ENCODE measurements at regions of chr6 and their contacts with region 1.

Region 1: GRCh38 chr6:119463081-119463626 is 113.6 kb upstream of the MAN1A1 start:
- DNase-seq: peak; percentile 22
- H3K4me3 Mint-ChIP-seq: peak overlapping the region; percentile 1
- H3K27ac Mint-ChIP-seq: peak overlapping the region; percentile 72
- H3K4me1 Mint-ChIP-seq: peaks cover 82% of the 10 kb centered on the region
- H3K27me3 Mint-ChIP-seq: no peaks in the 10 kb centered on the region

Region 2: DNA sequence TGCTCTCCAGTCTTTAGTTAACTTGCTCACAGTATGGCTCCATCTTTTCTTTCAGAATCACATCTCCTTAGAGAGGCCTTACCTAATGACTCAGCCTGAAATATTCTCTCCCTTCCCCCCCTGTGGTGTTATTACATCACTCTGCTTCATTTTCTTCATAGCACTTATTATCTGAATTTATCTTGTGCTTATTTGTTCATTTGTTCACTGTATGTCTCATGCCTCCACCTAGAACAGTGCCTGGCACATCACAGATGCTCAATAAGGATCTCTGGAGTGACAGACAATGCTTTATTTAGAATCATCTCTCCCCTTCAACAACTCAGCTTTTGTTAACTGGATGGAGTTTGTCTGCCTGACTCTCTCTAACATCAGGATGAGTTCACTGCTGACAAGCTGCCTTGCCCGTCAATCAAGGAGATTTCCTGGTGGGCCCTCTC is 17.0 kb before region 1 on chr6:
- intact Hi-C with region 1: loop called (anchors 1 kb)
- DNase-seq: no peak
- H3K4me3 Mint-ChIP-seq: no peak overlapping the region
- H3K27ac Mint-ChIP-seq: peak overlapping the region; percentile 6
- H3K4me1 Mint-ChIP-seq: peaks cover 55% of the 10 kb centered on the region
- H3K27me3 Mint-ChIP-seq: peaks cover 6% of the 10 kb centered on the region

Region 3: DNA sequence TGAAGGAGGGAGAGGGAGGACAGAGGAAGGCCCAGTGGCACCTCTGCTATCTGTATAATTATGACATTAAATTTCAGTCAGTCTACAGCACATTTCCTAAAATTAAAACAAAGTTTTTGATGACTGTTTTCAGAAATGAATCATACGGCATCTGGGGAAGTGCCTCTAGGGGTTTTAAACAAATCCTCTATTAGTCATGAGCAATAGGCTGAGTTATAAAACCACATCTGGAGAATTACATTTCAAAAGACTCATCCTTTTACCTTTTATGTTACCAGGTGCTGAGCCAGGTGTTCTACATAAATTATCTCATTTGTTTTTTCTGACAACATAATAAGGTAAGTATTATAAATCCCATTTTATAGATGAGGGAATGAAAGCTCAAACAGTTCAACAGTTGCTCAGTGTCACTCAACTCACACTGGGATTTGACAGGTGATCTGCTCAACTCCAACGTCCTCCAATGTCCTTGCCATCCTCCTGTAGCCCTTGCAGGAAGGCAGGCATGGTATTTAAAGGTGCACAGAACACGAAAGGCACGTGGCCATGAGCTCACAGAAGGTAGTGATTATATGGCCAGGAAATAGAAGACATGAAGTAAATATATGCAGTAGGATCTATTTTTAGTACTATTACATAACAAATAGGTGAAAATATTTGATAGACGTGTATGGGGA is 70.6 kb after region 1 on chr6:
- intact Hi-C with region 1: loop called (anchors 1 kb)
- DNase-seq: no peak
- H3K4me3 Mint-ChIP-seq: no peak overlapping the region
- H3K27ac Mint-ChIP-seq: no peak overlapping the region
- H3K4me1 Mint-ChIP-seq: peaks cover 12% of the 10 kb centered on the region
- H3K27me3 Mint-ChIP-seq: peaks cover 15% of the 10 kb centered on the region

Region 4: DNA sequence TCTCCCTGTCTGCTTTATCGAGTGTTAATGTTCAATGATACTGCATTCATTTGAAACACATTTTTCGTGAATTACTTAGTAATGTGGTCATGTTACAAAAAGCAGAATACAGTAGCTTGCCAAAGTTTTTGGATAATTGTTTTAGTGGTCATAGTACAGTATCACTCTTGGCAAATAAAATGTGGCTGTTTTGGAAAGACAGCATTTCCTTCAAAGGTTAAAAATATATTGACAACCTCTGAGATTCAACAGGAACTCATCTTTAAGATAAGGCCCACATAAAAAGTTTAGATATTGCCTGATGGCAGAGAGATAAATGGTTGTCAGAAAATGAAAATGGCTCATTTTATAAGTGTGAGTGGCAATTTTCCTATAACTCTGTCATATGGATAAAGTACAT is 184.2 kb after region 1 on chr6:
- intact Hi-C with region 1: no loop called
- DNase-seq: no peak
- H3K4me3 Mint-ChIP-seq: no peak overlapping the region
- H3K27ac Mint-ChIP-seq: no peak overlapping the region
- H3K4me1 Mint-ChIP-seq: no peaks in the 10 kb centered on the region
- H3K27me3 Mint-ChIP-seq: peaks cover 20% of the 10 kb centered on the region